ENCODE measurements at regions of chr14 and their contacts with region 1.

Region 1: GRCh38 chr14:77120771-77121743 is 20.5 kb downstream of the ZDHHC22 start:
- DNase-seq: no peak
- H3K4me3 ChIP-seq: no peak overlapping the region
- H3K27ac ChIP-seq: no peak overlapping the region
- H3K4me1 ChIP-seq: peaks cover 8% of the 10 kb centered on the region
- H3K27me3 ChIP-seq: no peaks in the 10 kb centered on the region
- CTCF ChIP-seq: no peak

Region 2: GRCh38 chr14:77172916-77173315 is 51.9 kb after region 1 on chr14:
- CTCF ChIA-PET with region 1: no interaction called
- POLR2A ChIA-PET with region 1: interaction called, 11 read pairs
- intact Hi-C with region 1: no loop called
- DNase-seq: no peak
- H3K4me3 ChIP-seq: no peak overlapping the region
- H3K27ac ChIP-seq: no peak overlapping the region
- H3K4me1 ChIP-seq: no peaks in the 10 kb centered on the region
- H3K27me3 ChIP-seq: no peaks in the 10 kb centered on the region
- CTCF ChIP-seq: no peak